ENCODE measurements at regions of chr9 and their contacts with region 1.

Region 1: DNA sequence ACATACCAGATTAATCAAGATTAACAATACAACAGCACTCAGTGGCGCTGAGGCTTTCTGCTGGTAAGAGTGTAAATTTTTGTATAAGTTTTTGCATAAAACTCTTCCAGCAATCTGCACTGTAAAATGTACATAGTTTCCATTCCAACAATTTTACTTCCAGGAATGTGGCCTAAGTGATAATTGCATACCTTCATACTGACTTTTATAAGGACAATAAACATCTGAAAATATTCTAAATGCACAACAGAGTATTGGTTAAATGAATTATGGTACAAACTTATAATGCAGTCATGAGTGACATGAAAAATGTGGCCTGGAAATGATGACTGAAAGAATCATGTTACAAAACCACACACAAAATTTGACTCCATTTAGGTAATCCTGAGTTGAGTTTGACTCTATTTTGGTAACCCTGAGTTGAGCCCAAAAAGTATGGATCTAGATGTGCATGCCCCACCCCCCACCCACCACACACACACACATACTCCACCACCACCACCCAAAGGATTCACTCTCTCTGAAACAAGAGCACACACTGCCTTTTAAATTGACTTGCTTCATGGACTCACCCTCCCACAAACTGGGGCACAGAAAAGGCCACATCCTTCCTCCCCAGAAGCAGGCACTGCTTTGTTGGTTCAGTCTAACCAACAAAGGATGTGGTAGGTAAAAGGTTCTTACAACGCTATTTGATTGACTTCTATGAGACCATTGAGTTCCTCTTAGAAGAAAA is 137.6 kb downstream of the SUSD1 start:
- DNase-seq: peak in 8 of 9 donors; percentile 70 to 92 (median 86)
- ATAC-seq: peak; percentile 98
- H3K4me3 ChIP-seq: no peak overlapping the region
- H3K4me3 Mint-ChIP-seq: peak overlapping the region; percentile 57 to 84 (median 70)
- H3K27ac ChIP-seq: no peak overlapping the region
- H3K27ac Mint-ChIP-seq: peak overlapping the region; percentile 12 to 83 (median 42)
- H3K4me1 ChIP-seq: peaks cover 21 to 27% of the 10 kb centered on the region in 2 donors
- H3K4me1 Mint-ChIP-seq: peaks cover 29 to 71% (median 63%) of the 10 kb centered on the region in 7 donors
- H3K27me3 ChIP-seq: no peaks in the 10 kb centered on the region
- H3K27me3 Mint-ChIP-seq: peaks cover 0 to 18% (median 6%) of the 10 kb centered on the region in 5 donors

Region 2: DNA sequence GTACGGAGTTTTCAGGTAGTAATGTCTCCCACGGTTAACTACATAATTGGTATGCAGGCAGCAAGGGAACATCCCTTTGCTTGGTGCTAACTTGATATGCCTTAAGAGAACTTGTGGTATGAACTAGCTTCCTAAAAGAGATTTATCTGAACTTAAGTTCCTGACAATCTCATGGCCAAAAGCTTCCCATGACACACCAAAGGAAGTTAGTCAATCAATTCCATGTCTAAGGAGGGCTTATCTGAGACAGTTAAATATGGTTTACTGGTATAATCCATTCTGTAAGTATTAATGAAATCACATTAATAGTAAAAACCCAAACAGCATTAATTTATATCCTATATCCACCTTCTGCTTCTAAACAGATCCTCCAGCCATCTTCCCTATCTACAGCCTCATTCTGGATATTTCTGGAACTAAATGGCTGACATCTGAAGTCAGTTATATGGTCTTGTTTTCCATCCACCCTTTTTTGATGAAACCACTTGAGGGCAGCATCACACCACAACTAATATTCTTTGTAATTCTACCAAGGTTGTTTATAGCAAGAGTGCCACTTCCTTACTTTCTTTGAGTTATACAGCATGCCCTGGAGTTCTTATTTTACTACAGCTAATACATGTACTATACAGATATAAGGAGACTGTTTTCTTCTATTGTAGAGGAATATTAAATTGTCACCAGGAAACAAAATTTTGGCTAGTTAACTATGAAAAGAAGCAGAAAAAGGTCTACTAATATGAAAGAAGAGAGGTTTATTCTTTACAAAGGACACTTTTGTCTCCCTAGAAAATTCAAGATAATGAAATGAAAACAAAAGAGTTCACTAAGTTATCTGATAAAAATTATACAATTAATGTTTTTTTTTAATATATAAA is 277.4 kb before region 1 on chr9:
- CTCF ChIA-PET with region 1: interaction called, 3 read pairs
- POLR2A ChIA-PET with region 1: interaction called, 3 read pairs
- intact Hi-C with region 1: loop called in 1 of 2 experiments (anchors 1 kb)
- DNase-seq: peak in 8 of 9 donors; percentile 25 to 77 (median 68)
- ATAC-seq: peak; percentile 82
- H3K4me3 ChIP-seq: no peak overlapping the region
- H3K4me3 Mint-ChIP-seq: no peak overlapping the region
- H3K27ac ChIP-seq: no peak overlapping the region
- H3K27ac Mint-ChIP-seq: no peak overlapping the region
- H3K4me1 ChIP-seq: no peaks in the 10 kb centered on the region
- H3K4me1 Mint-ChIP-seq: peaks cover 3 to 8% (median 5%) of the 10 kb centered on the region in 7 donors
- H3K27me3 ChIP-seq: no peaks in the 10 kb centered on the region
- H3K27me3 Mint-ChIP-seq: no peaks in the 10 kb centered on the region

Region 3: GRCh38 chr9:111937781-111938426 is 99.5 kb before region 1 on chr9:
- CTCF ChIA-PET with region 1: interaction called, 5 read pairs
- POLR2A ChIA-PET with region 1: interaction called, 3 read pairs
- intact Hi-C with region 1: loop called in 1 of 2 experiments (anchors 5 kb)
- DNase-seq: peak; percentile 12 to 71 (median 53)
- ATAC-seq: peak; percentile 96
- H3K4me3 ChIP-seq: peak overlapping the region; percentile 29
- H3K4me3 Mint-ChIP-seq: peak overlapping the region; percentile 52 to 82 (median 76)
- H3K27ac ChIP-seq: peak overlapping the region; percentile 19
- H3K27ac Mint-ChIP-seq: peak overlapping the region; percentile 83 to 93 (median 90)
- H3K4me1 ChIP-seq: peaks cover 15 to 19% of the 10 kb centered on the region in 2 donors
- H3K4me1 Mint-ChIP-seq: peaks cover 20 to 43% (median 33%) of the 10 kb centered on the region in 7 donors
- H3K27me3 ChIP-seq: no peaks in the 10 kb centered on the region
- H3K27me3 Mint-ChIP-seq: no peaks in the 10 kb centered on the region

Region 4: DNA sequence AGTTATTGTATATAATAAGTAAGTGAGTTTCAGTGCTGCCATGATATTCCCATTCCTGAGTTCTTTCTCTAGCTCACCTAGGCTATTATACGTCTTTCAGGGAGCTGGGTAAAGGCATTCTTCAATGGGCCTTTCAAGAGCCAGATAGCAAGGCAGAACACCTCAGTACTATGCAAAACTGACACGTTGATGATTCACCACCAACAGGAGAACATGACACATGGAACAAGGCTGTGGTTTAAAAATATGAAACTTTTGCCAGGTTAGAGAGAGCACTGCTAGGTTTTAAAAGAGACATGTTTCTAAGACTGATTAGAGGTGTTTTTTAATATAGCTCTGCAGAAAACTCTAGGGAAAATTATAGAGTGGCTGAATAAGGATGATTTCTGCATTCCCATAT is 44.9 kb before region 1 on chr9:
- CTCF ChIA-PET with region 1: no interaction called
- POLR2A ChIA-PET with region 1: interaction called, 3 read pairs
- intact Hi-C with region 1: loop called (anchors 2 to 5 kb)
- DNase-seq: peak in 1 of 9 donors; percentile 32
- ATAC-seq: no peak
- H3K4me3 ChIP-seq: no peak overlapping the region
- H3K4me3 Mint-ChIP-seq: no peak overlapping the region
- H3K27ac ChIP-seq: no peak overlapping the region
- H3K27ac Mint-ChIP-seq: no peak overlapping the region
- H3K4me1 ChIP-seq: peaks cover 0 to 13% of the 10 kb centered on the region in 2 donors
- H3K4me1 Mint-ChIP-seq: peaks cover 6 to 23% (median 18%) of the 10 kb centered on the region in 7 donors
- H3K27me3 ChIP-seq: no peaks in the 10 kb centered on the region
- H3K27me3 Mint-ChIP-seq: peaks cover 0 to 17% (median 0%) of the 10 kb centered on the region in 5 donors

Region 5: GRCh38 chr9:112074250-112075008 is 37.0 kb after region 1 on chr9:
- CTCF ChIA-PET with region 1: interaction called, 6 read pairs
- POLR2A ChIA-PET with region 1: no interaction called
- intact Hi-C with region 1: loop called (anchors 1 kb)
- DNase-seq: peak in 8 of 9 donors; percentile 53 to 81 (median 74)
- ATAC-seq: peak; percentile 90
- H3K4me3 ChIP-seq: no peak overlapping the region
- H3K4me3 Mint-ChIP-seq: peak overlapping the region in 9 of 10 donors; percentile 64 to 79 (median 72)
- H3K27ac ChIP-seq: no peak overlapping the region
- H3K27ac Mint-ChIP-seq: peak overlapping the region in 8 of 9 donors; percentile 6 to 85 (median 47)
- H3K4me1 ChIP-seq: peaks cover 3 to 16% of the 10 kb centered on the region in 2 donors
- H3K4me1 Mint-ChIP-seq: peaks cover 14 to 38% (median 28%) of the 10 kb centered on the region in 7 donors
- H3K27me3 ChIP-seq: no peaks in the 10 kb centered on the region
- H3K27me3 Mint-ChIP-seq: no peaks in the 10 kb centered on the region

Region 6: DNA sequence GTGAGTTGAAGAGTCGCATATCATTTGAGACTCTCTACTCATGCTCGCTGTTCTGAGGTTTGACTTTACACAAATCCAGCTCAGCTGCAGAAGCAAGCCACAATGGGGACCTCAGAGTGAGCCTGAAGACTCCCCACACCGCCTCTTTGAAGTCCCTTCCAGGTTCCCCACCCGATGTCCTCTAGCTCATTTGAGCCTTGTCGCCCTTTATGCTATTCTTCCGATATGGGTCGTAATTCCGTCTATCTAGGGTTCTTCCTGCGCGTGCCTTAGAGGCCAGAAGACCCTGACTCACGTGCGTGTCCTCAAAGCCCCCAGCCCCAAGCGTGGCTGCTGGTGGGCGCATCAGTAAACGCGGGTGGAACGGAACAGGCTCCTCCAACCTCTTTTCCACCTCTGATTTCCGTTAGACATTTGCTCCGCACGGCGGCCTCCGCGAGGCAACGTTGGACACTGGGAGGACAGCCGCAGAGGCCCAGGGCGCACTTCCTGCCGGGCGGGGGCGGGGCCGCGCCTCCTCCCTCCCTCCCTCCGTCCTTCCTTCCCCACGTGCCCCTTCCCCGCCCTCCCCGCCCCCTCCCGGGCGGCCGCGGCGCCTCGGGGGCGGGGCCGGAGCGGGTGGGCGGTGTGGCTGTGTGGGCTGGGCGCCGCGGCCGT is 712.8 kb after region 1 on chr9 and contains the start of gene SNX30:
- CTCF ChIA-PET with region 1: no interaction called
- POLR2A ChIA-PET with region 1: no interaction called
- intact Hi-C with region 1: loop called in 1 of 2 experiments (anchors 1 kb)
- DNase-seq: peak; percentile 66 to 83 (median 75)
- ATAC-seq: peak; percentile 94
- H3K4me3 ChIP-seq: peak within 1 kb of the TSS; percentile 70
- H3K4me3 Mint-ChIP-seq: peak within 1 kb of the TSS; percentile 88 to 94 (median 92)
- H3K27ac ChIP-seq: peak within 1 kb of the TSS; percentile 68
- H3K27ac Mint-ChIP-seq: peak within 1 kb of the TSS; percentile 88 to 98 (median 96)
- H3K4me1 ChIP-seq: peaks cover 46% of the 10 kb centered on the region in 2 donors
- H3K4me1 Mint-ChIP-seq: peaks cover 39 to 66% (median 60%) of the 10 kb centered on the region in 7 donors
- H3K27me3 ChIP-seq: no peaks in the 10 kb centered on the region
- H3K27me3 Mint-ChIP-seq: peaks cover 0 to 4% (median 0%) of the 10 kb centered on the region in 5 donors
- total RNA-seq, gene SNX30: 6.6 to 15.8 (median 9.2) TPM

Region 7: GRCh38 chr9:113536483-113537228 is 1499.2 kb after region 1 on chr9:
- CTCF ChIA-PET with region 1: no interaction called
- POLR2A ChIA-PET with region 1: no interaction called
- intact Hi-C with region 1: no loop called
- DNase-seq: no peak
- ATAC-seq: no peak
- H3K4me3 ChIP-seq: no peak overlapping the region
- H3K4me3 Mint-ChIP-seq: no peak overlapping the region
- H3K27ac ChIP-seq: no peak overlapping the region
- H3K27ac Mint-ChIP-seq: peak overlapping the region in 1 of 9 donors; percentile 25
- H3K4me1 ChIP-seq: no peaks in the 10 kb centered on the region
- H3K4me1 Mint-ChIP-seq: peaks cover 0 to 17% (median 4%) of the 10 kb centered on the region in 7 donors
- H3K27me3 ChIP-seq: no peaks in the 10 kb centered on the region
- H3K27me3 Mint-ChIP-seq: no peaks in the 10 kb centered on the region

Measured in naive thymus-derived CD4-positive, alpha-beta T cell (primary cell).